Posterior vena cava (tissue), 2 donors: ENCODE measurements at regions of chr20 and their contacts with region 1.

Region 1: DNA sequence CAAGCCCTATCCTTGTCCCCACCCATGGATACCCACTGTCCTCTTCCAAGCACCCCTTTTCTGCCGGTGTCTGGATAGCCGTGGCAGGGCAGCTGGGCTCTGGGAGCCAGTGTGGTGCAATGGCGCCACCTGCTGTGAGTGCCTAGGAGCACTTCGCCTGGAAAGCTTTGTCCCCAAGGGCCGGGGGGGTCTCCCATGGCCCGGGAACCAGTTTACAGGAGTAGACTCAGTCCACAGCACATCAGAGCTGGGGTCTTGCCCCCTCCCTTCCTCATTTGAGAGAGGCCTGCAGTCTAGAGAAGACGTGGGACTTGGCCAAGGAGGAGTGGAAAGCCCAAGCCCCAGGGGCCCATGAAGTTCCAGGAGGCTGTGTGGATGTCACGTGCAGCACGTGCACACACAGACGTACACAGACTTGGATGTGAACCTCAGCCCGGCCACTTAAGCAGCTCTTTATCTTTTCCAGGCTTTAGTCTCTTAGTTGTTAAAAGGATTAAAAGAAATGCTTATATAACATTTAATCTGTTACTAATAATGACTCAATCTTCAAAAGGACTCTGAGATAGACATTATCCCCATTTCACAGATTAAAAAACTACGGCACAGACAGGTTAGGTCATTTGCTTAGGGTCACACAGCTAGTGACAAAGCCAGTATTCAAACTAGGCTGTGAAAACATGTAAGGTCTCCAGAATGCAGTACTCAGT is 40.9 kb upstream of the CDH22 start:
- DNase-seq: peak; percentile 90

Region 2: GRCh38 chr20:46132705-46133120 is 216.5 kb before region 1 on chr20:
- intact Hi-C with region 1: loop called in 1 of 2 experiments (anchors 10 kb)
- DNase-seq: peak; percentile 92

Region 3: DNA sequence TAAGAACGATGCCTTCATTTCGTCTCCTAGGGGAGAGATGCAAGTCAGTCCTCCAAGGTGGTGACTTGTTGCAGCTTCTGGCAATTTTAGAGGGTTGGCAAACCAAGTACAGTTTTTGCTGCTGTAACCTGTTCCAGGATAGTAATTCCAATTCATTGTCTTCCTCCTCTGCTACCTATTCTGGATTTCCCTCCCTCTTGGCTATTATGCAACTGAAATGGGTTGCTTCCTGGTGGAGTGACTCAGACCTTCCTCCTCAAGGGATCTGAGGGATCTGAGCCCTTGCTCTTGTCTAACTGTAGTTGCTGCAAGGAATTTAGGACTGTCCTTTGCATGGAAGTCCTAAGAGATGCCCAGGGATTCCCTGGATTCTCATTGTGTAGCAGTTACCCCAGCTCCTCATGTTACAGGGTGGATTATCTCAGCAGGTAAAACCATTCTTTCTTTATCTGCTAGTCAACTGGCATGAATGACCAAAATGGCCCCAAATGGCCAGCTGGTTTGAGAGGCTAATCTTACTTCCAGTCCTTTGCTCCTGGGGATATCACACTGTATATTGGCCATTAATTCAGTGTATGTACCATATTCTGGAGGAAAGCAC is 74.8 kb after region 1 on chr20:
- intact Hi-C with region 1: no loop called
- DNase-seq: no peak